ENCODE measurements at regions of chr15 and their contacts with region 1.

Region 1: DNA sequence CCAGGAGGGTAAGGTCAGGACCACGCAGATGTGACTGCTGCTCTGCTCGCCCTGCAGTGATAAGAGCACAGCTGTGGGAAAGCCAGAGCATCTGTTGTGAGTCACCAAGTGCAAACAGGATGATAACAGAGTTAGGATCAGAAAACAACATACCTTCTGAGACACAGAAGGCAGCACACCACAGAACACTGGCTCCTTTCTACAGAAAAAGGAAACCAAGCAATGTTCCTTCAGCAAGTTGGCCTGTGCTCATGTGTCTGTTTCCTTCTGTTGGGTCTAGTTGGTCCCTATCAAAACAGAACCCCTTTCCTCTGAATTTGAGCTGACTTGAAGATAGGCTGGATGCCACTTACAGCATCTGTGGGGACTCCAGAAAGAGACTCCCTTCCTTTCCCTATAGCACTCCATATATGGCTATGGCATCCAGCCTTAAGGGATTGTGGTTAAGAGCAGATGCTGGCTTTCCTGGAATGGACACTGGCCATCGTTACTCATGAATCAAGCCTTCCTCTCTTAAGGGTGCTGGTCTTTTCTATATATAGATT is 440.7 kb upstream of the THBS1 start:
- DNase-seq: no peak
- H3K4me3 ChIP-seq: no peak overlapping the region
- H3K27me3 ChIP-seq: no peaks in the 10 kb centered on the region
- CTCF ChIP-seq: no peak

Region 2: DNA sequence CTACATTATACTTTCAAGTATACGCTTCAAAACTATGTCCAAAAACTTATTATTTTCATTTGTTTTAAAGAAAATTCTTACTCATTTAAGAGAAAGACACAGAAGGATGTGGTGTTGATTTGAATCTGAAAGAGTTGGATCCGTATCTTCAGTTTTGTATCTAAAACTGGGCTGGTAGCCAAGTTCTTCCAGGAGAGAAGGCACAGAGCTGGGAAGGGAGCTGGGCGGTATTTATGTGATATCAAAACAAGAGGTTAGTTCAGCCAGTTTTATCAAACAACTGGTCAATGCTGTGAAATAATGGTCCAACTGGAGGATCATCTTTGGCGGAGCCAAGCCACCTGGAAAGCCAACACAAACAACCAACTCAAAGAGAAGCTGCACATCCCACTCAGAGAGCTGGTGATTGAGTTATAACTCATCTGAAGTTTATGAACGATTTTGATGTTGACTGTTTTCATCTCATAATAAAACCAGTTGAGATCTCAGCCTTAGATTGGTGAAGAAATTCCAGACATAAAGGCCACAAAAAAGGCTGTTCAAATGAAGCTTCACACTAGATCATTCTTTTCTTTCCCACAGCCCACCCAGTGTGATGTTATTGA is 85.9 kb before region 1 on chr15:
- CTCF ChIA-PET with region 1: no interaction called
- POLR2A ChIA-PET with region 1: no interaction called
- DNase-seq: no peak
- H3K4me3 ChIP-seq: no peak overlapping the region
- H3K27me3 ChIP-seq: no peaks in the 10 kb centered on the region
- CTCF ChIP-seq: no peak

Region 3: GRCh38 chr15:39270934-39271333 is 130.8 kb after region 1 on chr15:
- CTCF ChIA-PET with region 1: no interaction called
- POLR2A ChIA-PET with region 1: interaction called, 17 read pairs
- DNase-seq: peak; percentile 94
- H3K4me3 ChIP-seq: no peak overlapping the region
- H3K27me3 ChIP-seq: no peaks in the 10 kb centered on the region
- CTCF ChIP-seq: no peak

Region 4: GRCh38 chr15:39381517-39381916 is 241.4 kb after region 1 on chr15:
- CTCF ChIA-PET with region 1: no interaction called
- POLR2A ChIA-PET with region 1: no interaction called
- DNase-seq: no peak
- H3K4me3 ChIP-seq: no peak overlapping the region
- H3K27me3 ChIP-seq: no peaks in the 10 kb centered on the region
- CTCF ChIP-seq: no peak

Region 5: GRCh38 chr15:39782441-39783138 is 642.5 kb after region 1 on chr15 and contains the start of gene FSIP1:
- CTCF ChIA-PET with region 1: no interaction called
- POLR2A ChIA-PET with region 1: interaction called, 11 read pairs
- DNase-seq: peak; percentile 69
- H3K4me3 ChIP-seq: peak within 1 kb of the TSS; percentile 68
- H3K27me3 ChIP-seq: no peaks in the 10 kb centered on the region
- CTCF ChIP-seq: no peak
- polyA plus RNA-seq, gene FSIP1: 0.22 and 0.65 TPM in 2 replicates